ENCODE measurements at regions of chr6 and their contacts with region 1.

Region 1: GRCh38 chr6:31689249-31690110 is 8.6 kb upstream of the LY6G5C start:
- DNase-seq: peak in 1 of 2 experiments; percentile 81
- H3K4me3 ChIP-seq: no peak overlapping the region
- H3K27ac ChIP-seq: no peak overlapping the region
- H3K4me1 ChIP-seq: peaks cover 0 to 1% (median 0%) of the 10 kb centered on the region in 4 experiments; a peak in 2 of 7 replicates
- H3K27me3 ChIP-seq: no peaks in the 10 kb centered on the region; a peak in 1 of 7 replicates
- CTCF ChIP-seq: peak; percentile 58 to 88 (median 83)
- EP300 ChIP-seq: no peak
- POLR2A ChIP-seq: no peak
- RAD21 ChIP-seq: peak; percentile 50 to 61

Region 2: DNA sequence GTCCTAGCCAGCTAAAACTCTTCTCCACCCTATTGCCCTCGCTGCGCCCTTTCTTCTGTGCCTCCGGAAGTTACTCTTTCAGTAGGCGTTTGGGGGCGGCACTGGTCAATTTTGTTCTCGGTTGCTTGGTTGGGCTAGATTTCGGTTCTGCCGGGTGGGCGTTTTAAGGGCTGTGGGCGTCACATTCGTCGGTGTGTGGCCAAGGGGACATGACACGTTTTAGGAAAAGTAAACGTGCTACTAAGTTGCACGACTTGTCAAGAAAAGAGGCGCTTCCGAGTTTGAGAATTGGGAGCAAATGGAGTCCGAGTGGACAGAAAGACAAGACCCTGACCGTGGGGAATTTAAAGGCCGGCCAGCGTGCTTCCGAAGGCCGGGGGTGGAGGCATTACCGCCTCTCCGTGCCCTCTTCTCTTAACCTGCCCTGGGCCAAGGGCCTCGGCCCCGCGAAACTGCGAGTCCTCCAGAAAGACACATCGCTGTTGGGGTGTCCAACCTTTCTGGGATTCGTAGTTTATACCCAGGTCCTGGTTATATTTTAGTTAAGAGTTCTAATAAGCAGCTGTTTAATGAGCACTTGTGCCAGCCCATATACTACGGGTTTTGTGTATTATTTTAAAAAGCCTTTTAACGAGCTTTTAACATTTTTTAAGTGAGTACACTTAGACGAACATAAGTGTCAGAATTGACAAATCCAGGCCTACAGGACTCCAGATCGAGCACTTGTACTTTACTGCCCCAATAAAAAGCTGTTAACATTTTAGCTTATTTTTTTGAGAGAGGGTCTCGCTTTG is 36.4 kb before region 1 on chr6:
- CTCF ChIA-PET with region 1: interaction called, 5 read pairs
- POLR2A ChIA-PET with region 1: interaction called, 33 read pairs
- DNase-seq: peak in 1 of 2 experiments; percentile 76
- H3K4me3 ChIP-seq: peak overlapping the region; percentile 82 to 94 (median 92)
- H3K27ac ChIP-seq: peak overlapping the region; percentile 99
- H3K4me1 ChIP-seq: peaks cover 0 to 5% (median under 1%) of the 10 kb centered on the region in 4 experiments; a peak in 2 of 7 replicates
- H3K27me3 ChIP-seq: no peaks in the 10 kb centered on the region
- CTCF ChIP-seq: peak in 1 of 3 experiments; percentile 18; a peak in 1 of 4 replicates
- EP300 ChIP-seq: no peak
- POLR2A ChIP-seq: peak in 1 of 2 experiments; percentile 79; a peak in 2 of 3 replicates
- RAD21 ChIP-seq: peak in 1 of 2 experiments; percentile 21; a peak in 2 of 4 replicates

Region 3: DNA sequence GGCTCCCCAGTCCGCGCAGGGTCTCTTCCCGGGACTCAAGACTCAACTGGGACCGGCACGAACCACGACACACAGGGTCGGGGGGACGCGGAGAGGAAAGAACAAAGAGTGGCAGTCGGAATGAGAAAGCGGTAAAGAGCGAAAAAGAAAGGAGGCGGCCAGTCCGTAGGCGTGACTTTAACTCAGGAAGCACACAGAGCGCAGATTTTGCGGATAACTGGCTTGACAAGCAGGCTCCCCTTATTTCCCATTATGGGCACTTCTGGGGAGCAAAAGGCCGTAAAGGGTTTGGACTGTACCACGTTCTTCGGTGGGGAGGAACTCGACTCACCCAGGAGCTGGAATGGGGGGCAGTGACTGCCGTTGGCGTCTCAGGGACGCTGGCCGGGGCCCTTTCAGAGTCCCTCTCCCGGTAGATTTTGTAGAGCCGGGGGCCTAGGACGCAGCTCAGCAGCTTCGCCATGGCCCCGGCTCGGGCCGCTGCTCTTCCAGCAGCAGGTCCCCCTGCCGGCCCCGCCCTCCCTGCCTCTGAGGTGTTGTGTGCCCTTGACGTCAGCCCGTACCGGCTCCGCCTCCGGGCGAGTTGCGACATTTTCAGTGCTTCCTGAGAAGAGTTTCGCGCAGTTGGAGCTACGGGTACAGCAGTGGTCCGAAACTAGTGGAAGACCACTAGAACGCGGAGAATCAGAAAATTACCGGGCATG is 13.5 kb after region 1 on chr6 and contains the start of gene ABHD16A:
- CTCF ChIA-PET with region 1: interaction called, 20 read pairs
- POLR2A ChIA-PET with region 1: interaction called, 10 read pairs
- DNase-seq: peak; percentile 95 to 96
- H3K4me3 ChIP-seq: peak within 1 kb of the TSS; percentile 69 to 94 (median 90)
- H3K27ac ChIP-seq: peak within 1 kb of the TSS; percentile 89; the same call in 1 of the 2 replicates
- H3K4me1 ChIP-seq: peaks cover 2 to 5% (median 3%) of the 10 kb centered on the region in 4 experiments; a peak in 4 of 7 replicates
- H3K27me3 ChIP-seq: no peaks in the 10 kb centered on the region
- CTCF ChIP-seq: no peak
- EP300 ChIP-seq: peak; percentile 23 to 88
- POLR2A ChIP-seq: peak in 1 of 2 experiments; percentile 85; a peak in 2 of 3 replicates
- RAD21 ChIP-seq: no peak
- total RNA-seq, gene ABHD16A: 29.3 and 32.9 TPM in 2 replicates

Region 4: DNA sequence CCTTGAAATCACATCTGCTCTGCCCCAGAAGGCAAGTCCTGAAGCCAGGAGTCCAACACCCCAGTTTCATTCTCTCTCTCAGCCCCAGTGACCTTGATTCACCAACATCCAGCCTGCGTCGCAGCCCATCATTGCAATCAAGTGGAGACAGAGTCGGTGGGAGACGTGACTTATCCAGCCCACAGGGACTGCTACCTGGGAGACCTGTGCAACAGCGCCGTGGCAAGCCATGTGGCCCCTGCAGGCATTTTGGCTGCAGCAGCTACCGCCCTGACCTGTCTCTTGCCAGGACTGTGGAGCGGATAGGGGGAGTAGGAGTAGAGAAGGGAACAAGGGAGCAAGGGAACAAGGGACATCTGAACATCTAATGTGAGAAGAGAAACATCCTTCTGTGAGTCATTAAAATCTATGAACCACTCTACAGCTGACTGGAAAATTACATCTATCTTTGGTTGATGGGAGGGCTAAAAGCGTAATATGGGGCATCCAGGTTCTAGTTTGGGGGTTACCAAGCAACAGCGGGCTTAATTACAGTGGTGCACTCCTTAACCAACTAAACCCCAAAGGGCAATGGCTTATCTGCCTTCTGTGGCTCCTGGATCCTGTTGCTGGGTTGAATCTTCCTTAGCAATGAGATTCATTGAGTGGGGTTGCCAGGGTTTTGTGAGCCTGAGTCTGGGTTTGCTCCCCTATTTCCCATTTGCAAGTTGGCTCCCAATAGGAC is 28.2 kb after region 1 on chr6:
- CTCF ChIA-PET with region 1: interaction called, 18 read pairs
- POLR2A ChIA-PET with region 1: interaction called, 4 read pairs
- DNase-seq: no peak
- H3K4me3 ChIP-seq: 0 out of 8 replicates have a peak overlapping the region, but pooled peaks of 1 of the 4 experiments have one; percentile 9
- H3K27ac ChIP-seq: no peak overlapping the region
- H3K4me1 ChIP-seq: peaks cover 11 to 29% (median 27%) of the 10 kb centered on the region in 4 experiments
- H3K27me3 ChIP-seq: no peaks in the 10 kb centered on the region; a peak in 1 of 7 replicates
- CTCF ChIP-seq: peak; percentile 52 to 74 (median 72); a peak in 3 of 4 replicates
- EP300 ChIP-seq: no peak
- POLR2A ChIP-seq: no peak
- RAD21 ChIP-seq: peak; percentile 50 to 56; a peak in 3 of 4 replicates

Region 5: GRCh38 chr6:31795616-31796298 is 106.3 kb after region 1 on chr6 and contains the start of gene VARS1:
- CTCF ChIA-PET with region 1: interaction called, 17 read pairs
- POLR2A ChIA-PET with region 1: no interaction called
- DNase-seq: peak in 1 of 2 experiments; percentile 96
- H3K4me3 ChIP-seq: peak within 1 kb of the TSS; percentile 82 to 95 (median 90)
- H3K27ac ChIP-seq: peak within 1 kb of the TSS; percentile 99
- H3K4me1 ChIP-seq: peaks cover 0 to 2% (median under 1%) of the 10 kb centered on the region in 4 experiments; a peak in 3 of 7 replicates
- H3K27me3 ChIP-seq: no peaks in the 10 kb centered on the region
- CTCF ChIP-seq: peak; percentile 92 to 99 (median 94)
- EP300 ChIP-seq: peak in 1 of 2 experiments; percentile 44; a peak in 1 of 3 replicates
- POLR2A ChIP-seq: peak in 1 of 2 experiments; percentile 72; a peak in 2 of 3 replicates
- RAD21 ChIP-seq: peak; percentile 71 to 79
- total RNA-seq, gene VARS1: 162 and 163 TPM in 2 replicates

Measured in H1 (cell line).